Activated naive CD4-positive, alpha-beta T cell treated with anti-CD3 and anti-CD28 coated beads, Interleukin-2, amount 10 ng/mL, durations not matched to agents 7 days and 5 days (primary cell): ENCODE measurements at regions of chr12 and their contacts with region 1.

Region 1: DNA sequence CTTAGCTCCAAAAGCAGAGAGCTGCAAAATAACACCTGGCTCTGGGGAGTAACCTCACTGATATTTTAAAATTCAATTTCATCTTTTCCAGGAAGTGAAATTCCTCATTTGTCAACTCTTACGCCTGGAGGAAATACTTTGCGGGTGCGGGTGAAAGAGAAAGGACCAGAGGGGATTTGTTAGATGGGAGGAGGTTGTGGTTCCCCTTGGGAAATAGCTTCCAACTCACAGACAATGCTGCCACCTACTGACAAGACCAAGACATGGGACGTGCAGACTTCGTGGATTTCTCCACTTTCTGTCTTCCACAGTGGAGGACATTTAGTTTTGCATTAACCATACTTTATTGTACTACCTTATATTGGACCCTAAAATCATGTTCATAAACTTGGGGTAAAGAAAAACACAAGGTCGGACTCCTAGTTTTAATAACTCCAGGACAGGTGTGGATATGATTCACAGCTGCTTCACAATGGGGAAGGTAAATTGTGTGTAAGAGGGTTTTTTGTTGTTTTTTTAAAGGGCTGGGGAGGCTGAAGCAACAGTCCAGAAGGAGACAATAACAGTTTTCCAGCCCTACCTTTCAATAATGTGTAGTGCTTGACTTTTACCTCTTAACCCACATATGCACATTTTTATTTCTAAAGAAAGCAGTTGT is 10.8 kb downstream of the FBXL14 start:
- DNase-seq: peak; percentile 78
- H3K4me3 Mint-ChIP-seq: no peak overlapping the region
- H3K27ac Mint-ChIP-seq: no peak overlapping the region
- H3K4me1 Mint-ChIP-seq: peaks cover 17% of the 10 kb centered on the region
- H3K27me3 Mint-ChIP-seq: peaks cover 3% of the 10 kb centered on the region

Region 2: GRCh38 chr12:569803-570434 is 1013.6 kb before region 1 on chr12:
- CTCF ChIA-PET with region 1: interaction called, 11 read pairs
- DNase-seq: peak; percentile 90
- H3K4me3 Mint-ChIP-seq: peak overlapping the region; percentile 78
- H3K27ac Mint-ChIP-seq: no peak overlapping the region
- H3K4me1 Mint-ChIP-seq: peaks cover 78% of the 10 kb centered on the region
- H3K27me3 Mint-ChIP-seq: peaks cover 3% of the 10 kb centered on the region

Region 3: GRCh38 chr12:1533602-1534304 is 49.8 kb before region 1 on chr12:
- CTCF ChIA-PET with region 1: interaction called, 10 read pairs
- DNase-seq: peak; percentile 62
- H3K4me3 Mint-ChIP-seq: peak overlapping the region; percentile 37
- H3K27ac Mint-ChIP-seq: no peak overlapping the region
- H3K4me1 Mint-ChIP-seq: peaks cover 32% of the 10 kb centered on the region
- H3K27me3 Mint-ChIP-seq: peaks cover 91% of the 10 kb centered on the region

Region 4: GRCh38 chr12:1544996-1545700 is 38.4 kb before region 1 on chr12:
- CTCF ChIA-PET with region 1: no interaction called
- DNase-seq: no peak
- H3K4me3 Mint-ChIP-seq: no peak overlapping the region
- H3K27ac Mint-ChIP-seq: no peak overlapping the region
- H3K4me1 Mint-ChIP-seq: no peaks in the 10 kb centered on the region
- H3K27me3 Mint-ChIP-seq: peaks cover 38% of the 10 kb centered on the region

Region 5: DNA sequence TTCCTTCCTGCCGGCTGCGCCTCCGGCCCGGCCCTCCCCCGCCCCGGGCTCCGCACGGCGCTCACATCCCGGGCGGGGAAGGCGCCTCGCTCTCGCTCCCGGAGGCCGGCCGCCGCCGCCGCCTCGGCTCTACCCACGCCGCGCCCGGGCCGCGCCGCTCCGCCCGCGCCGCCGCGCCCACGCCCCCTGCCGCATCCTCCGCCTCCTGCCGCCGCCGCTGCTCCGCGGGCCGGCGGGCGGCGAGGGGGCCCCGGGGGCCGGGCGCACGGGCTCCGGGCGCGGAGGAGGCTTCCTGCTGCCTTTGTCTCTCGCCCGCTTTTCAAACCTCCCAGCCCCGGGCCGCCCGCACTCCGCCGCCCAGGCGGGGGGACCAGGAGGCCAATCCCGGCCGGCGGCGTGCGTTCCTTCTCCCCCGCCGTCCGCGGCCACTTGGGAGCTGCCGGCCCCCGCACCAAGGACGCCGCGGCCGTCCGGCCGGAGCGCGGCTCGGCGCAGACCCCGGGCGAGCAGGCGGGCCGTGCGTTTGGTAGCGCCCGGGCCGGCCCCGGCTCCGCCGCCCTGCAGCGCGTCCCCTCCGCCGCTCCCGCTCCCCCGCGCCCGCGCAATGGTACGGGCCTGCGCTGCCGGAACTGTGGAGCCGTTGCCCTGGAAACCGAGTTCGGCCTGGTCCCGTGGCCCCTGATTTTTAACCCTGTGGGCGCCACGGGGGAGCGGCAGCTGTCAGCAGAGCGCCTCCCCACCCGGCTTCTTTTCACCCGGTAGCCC is 10.9 kb after region 1 on chr12 and contains the start of gene FBXL14:
- CTCF ChIA-PET with region 1: interaction called, 17 read pairs
- DNase-seq: peak; percentile 94
- H3K4me3 Mint-ChIP-seq: peak within 1 kb of the TSS; percentile 97
- H3K27ac Mint-ChIP-seq: peak within 1 kb of the TSS; percentile 94
- H3K4me1 Mint-ChIP-seq: peaks cover 50% of the 10 kb centered on the region
- H3K27me3 Mint-ChIP-seq: no peaks in the 10 kb centered on the region

Region 6: GRCh38 chr12:1605129-1606020 is 21.8 kb after region 1 on chr12:
- CTCF ChIA-PET with region 1: interaction called, 16 read pairs
- DNase-seq: peak; percentile 69
- H3K4me3 Mint-ChIP-seq: peak overlapping the region; percentile 72
- H3K27ac Mint-ChIP-seq: no peak overlapping the region
- H3K4me1 Mint-ChIP-seq: peaks cover 37% of the 10 kb centered on the region
- H3K27me3 Mint-ChIP-seq: peaks cover 26% of the 10 kb centered on the region

Region 7: DNA sequence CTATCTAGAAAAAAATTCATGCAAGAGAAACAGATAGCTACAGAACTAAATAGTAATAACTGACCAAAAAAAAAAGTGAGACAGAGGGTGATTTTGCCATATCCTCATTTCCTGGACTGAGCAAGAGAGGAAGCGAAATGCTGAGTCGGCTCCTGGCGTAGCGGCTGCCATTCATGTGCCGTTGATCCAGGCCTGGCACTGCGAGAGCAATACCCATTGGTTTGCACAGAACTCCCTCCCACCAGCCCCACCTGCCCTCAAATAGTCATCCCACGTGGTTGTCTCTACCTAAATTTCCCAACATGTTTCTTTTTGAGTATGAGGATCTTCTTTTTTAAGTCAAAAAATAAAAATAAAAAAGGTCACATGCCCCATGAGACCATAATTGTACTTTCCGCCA is 36.0 kb after region 1 on chr12:
- CTCF ChIA-PET with region 1: no interaction called
- DNase-seq: no peak
- H3K4me3 Mint-ChIP-seq: no peak overlapping the region
- H3K27ac Mint-ChIP-seq: no peak overlapping the region
- H3K4me1 Mint-ChIP-seq: peaks cover 13% of the 10 kb centered on the region
- H3K27me3 Mint-ChIP-seq: peaks cover 51% of the 10 kb centered on the region

Region 8: DNA sequence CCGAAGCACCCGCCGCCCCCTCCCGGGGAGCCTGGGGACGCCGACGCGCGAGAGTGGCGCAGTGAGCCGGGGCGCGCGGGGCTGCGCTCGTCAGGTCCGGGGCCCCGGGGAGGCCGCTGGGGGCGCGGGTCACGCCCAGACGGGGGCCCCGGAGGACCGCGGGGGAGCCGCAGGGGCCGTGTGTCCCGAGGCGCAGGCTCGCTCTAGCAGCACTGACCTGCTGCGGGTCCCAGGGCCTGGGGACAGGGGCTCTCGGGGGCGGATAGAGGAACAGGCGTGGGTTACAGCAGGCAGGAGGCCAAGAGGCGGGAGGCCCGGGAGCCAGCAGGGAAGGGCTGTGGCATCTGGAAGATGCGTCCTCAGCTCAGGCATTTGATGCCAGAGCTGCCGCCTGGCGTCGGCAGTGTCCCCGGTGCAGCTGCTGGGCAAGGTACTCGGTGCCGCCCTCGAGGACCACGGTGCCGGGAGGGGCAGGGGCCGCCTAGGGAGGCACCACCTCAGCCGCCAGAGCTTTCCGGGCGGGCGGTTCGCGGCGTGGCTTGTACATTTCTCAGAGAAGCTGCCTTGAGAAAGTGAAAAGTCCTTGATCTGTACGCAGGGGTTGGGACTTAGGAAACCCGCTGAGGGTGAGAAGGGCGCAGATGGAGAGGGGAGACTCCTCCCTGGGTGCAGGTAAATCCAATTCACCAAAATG is 46.7 kb after region 1 on chr12:
- CTCF ChIA-PET with region 1: no interaction called
- DNase-seq: peak; percentile 39
- H3K4me3 Mint-ChIP-seq: peak overlapping the region; percentile 19
- H3K27ac Mint-ChIP-seq: no peak overlapping the region
- H3K4me1 Mint-ChIP-seq: peaks cover 21% of the 10 kb centered on the region
- H3K27me3 Mint-ChIP-seq: peaks cover 90% of the 10 kb centered on the region